ENCODE measurements at regions of chr5 and their contacts with region 1.

Region 1: DNA sequence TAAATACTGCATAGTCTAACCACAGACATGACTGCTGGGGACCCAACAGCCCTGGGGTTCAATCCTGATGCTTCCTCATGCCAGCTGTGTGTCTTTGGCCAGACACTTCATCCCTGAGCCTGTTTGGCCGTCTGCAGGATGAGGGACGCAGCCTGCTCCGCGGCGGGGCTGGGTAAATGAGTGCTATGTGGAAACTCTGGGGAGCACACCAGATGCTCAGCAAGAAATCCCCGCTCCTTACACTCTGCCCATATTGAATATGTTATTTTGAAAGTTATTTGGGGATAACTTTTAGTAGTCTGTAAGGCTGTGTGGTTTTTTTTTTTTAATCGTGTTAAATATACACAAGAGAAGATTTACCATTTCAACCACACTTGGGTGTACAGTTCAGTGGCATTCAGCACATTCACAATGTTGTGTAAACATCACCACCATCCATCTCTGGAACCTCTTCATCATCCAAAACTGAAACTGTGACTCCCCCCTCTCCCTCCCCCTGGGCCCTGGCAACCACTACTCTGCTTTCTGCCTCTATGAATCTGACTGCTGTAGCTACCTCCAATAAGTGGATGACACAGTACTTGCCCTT is 42.7 kb downstream of the SH3PXD2B start:
- DNase-seq: no peak
- ATAC-seq: no peak
- H3K4me3 ChIP-seq: no peak overlapping the region
- H3K27ac ChIP-seq: no peak overlapping the region
- H3K4me1 ChIP-seq: peaks cover 72% of the 10 kb centered on the region
- H3K27me3 ChIP-seq: no peaks in the 10 kb centered on the region
- CTCF ChIP-seq: no peak

Region 2: DNA sequence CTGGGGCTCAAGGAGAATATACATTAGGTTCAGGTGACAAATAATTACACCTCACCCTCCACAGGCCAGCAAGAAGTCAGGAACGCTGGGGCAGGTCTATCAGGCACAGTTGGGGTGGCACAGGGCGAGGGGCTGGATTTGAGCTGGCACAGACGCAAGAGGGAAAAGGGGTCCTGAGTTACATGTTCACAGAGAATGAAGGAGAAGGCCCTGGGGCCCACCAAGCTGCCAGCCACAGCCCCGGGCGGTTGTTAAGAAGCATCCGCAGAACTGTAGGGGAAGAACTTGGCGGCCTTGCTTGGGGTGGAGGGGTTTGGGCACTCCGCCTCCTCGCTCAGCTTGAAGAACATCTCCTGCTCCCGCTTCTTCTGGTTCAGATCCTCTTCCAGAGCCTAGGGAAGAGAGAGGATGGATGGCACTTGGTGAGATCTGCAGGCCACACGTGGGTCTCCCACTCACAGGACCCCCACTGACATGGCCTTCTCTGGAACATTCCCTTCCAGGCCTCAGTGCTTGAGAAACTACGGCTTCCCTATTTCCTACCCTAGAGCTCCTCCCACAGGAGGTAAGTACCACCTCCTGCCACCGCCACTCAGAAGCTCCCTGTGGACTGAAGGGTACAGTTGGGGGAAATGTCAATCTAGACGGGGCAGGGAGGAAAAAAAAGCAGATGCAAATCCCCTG is 366.8 kb before region 1 on chr5:
- CTCF ChIA-PET with region 1: no interaction called
- POLR2A ChIA-PET with region 1: no interaction called
- intact Hi-C with region 1: no loop called
- DNase-seq: no peak
- ATAC-seq: no peak
- H3K4me3 ChIP-seq: no peak overlapping the region
- H3K27ac ChIP-seq: no peak overlapping the region
- H3K4me1 ChIP-seq: no peaks in the 10 kb centered on the region
- H3K27me3 ChIP-seq: no peaks in the 10 kb centered on the region
- CTCF ChIP-seq: 0 out of 2 replicates have a peak, but pooled peaks have one; percentile 8

Region 3: GRCh38 chr5:172334196-172334595 is 77.4 kb before region 1 on chr5:
- CTCF ChIA-PET with region 1: no interaction called
- POLR2A ChIA-PET with region 1: no interaction called
- intact Hi-C with region 1: no loop called
- DNase-seq: peak; percentile 18
- ATAC-seq: no peak
- H3K4me3 ChIP-seq: no peak overlapping the region
- H3K27ac ChIP-seq: no peak overlapping the region
- H3K4me1 ChIP-seq: no peaks in the 10 kb centered on the region
- H3K27me3 ChIP-seq: no peaks in the 10 kb centered on the region
- CTCF ChIP-seq: peak; percentile 55

Region 4: DNA sequence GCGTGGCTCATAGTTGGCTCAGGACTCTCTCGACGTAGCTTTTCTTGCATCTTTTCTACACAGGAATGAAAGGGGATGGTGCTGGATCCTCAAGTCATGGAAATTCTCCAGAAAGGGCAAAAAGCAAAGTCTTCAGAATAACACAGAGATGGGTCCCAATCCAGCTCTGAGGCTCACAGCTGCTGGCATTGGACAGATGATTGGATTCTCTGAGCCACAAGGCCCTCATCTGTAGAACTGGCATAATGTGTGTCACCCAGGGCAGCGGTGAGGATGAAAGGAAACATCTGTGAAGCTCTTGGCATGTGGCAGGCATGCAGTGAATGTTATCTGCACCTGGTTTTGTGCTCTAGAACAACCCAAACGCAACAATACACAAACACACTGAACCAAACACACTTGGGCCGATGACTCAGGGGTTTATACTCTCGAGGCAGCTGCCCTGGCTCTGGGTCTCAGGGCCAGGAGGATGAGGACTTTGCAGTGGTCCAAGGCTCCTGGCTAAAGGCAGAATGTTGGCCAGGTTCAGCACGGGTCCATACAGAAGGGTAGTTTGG is 64.0 kb before region 1 on chr5:
- CTCF ChIA-PET with region 1: no interaction called
- POLR2A ChIA-PET with region 1: no interaction called
- intact Hi-C with region 1: no loop called
- DNase-seq: no peak
- ATAC-seq: no peak
- H3K4me3 ChIP-seq: no peak overlapping the region
- H3K27ac ChIP-seq: no peak overlapping the region
- H3K4me1 ChIP-seq: no peaks in the 10 kb centered on the region
- H3K27me3 ChIP-seq: no peaks in the 10 kb centered on the region
- CTCF ChIP-seq: no peak

Region 5: DNA sequence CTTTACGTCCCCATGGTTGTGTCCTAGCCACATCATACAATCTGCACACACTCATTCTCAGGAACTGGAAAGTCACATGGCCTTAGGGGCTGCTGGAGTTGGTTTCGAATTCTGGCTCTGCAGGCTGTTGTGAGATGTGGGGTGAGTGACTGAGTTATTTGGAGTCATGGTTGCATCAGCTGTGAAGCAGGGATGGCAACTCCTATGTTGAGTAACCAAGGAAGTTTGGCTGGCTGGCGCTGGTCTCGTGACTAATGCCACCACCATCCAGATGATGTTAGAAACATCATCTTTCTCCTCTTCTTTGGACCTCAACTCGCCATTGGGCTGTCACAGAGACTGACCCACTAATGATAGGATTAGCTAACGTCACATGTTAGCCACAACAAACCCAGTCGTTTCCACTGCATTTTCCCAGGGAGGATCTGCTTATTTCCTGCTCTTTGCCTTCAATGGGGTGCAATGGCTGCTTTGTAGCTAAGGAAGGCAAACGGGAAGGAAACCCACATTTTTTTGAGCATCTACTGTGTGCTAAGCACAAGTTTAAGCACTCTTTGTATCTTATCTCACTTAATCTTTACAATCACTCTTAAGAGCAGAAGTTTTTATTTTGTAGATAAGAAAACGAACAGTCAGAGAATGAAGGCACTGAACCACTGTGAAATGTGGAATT is 49.9 kb before region 1 on chr5:
- CTCF ChIA-PET with region 1: no interaction called
- POLR2A ChIA-PET with region 1: no interaction called
- intact Hi-C with region 1: loop called (anchors 2 kb)
- DNase-seq: peak; percentile 98
- ATAC-seq: peak; percentile 97
- H3K4me3 ChIP-seq: no peak overlapping the region
- H3K27ac ChIP-seq: peak overlapping the region; percentile 79
- H3K4me1 ChIP-seq: peaks cover 16% of the 10 kb centered on the region
- H3K27me3 ChIP-seq: no peaks in the 10 kb centered on the region
- CTCF ChIP-seq: no peak